Activated T-helper 2 cell treated with anti-CD3 and anti-CD28 coated beads, Interferon-gamma antibody, Interleukin-2, Interleukin-4, amounts not matched to agents 10 μg/mL and 5 μg/mL and 100 μg/mL, durations not matched to agents 14 hours and 24 hours and 36 hours (primary cell): ENCODE measurements at regions of chr9 and their contacts with region 1.

Region 1: DNA sequence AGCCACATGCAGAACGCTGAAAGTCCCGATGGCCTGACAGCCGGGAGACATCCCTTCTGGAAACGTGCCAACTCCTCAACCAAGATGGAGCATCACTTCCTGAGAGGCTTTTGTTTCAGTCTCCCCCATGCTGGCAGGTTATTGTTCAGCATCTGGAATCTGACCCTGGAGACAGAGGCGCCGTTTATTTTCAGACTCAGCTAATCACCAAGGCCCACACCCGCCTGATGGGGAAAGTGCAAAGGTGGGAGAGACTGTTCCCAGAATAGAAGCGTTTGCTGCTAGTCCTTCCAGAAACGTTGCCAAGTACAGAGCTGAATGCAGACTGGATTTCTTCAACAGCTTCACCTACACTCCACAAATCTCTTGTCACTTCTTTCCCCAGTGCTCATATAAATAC is 41.8 kb upstream of the S1PR3 start:
- DNase-seq: no peak
- H3K4me3 Mint-ChIP-seq: no peak overlapping the region
- H3K27ac Mint-ChIP-seq: no peak overlapping the region
- H3K4me1 Mint-ChIP-seq: peaks cover 44% of the 10 kb centered on the region
- H3K27me3 Mint-ChIP-seq: peaks cover 11% of the 10 kb centered on the region

Region 2: GRCh38 chr9:88835038-88835466 is 114.4 kb before region 1 on chr9:
- intact Hi-C with region 1: loop called (anchors 10 kb)
- DNase-seq: no peak
- H3K4me3 Mint-ChIP-seq: no peak overlapping the region
- H3K27ac Mint-ChIP-seq: no peak overlapping the region
- H3K4me1 Mint-ChIP-seq: peaks cover 19% of the 10 kb centered on the region
- H3K27me3 Mint-ChIP-seq: peaks cover 69% of the 10 kb centered on the region

Region 3: DNA sequence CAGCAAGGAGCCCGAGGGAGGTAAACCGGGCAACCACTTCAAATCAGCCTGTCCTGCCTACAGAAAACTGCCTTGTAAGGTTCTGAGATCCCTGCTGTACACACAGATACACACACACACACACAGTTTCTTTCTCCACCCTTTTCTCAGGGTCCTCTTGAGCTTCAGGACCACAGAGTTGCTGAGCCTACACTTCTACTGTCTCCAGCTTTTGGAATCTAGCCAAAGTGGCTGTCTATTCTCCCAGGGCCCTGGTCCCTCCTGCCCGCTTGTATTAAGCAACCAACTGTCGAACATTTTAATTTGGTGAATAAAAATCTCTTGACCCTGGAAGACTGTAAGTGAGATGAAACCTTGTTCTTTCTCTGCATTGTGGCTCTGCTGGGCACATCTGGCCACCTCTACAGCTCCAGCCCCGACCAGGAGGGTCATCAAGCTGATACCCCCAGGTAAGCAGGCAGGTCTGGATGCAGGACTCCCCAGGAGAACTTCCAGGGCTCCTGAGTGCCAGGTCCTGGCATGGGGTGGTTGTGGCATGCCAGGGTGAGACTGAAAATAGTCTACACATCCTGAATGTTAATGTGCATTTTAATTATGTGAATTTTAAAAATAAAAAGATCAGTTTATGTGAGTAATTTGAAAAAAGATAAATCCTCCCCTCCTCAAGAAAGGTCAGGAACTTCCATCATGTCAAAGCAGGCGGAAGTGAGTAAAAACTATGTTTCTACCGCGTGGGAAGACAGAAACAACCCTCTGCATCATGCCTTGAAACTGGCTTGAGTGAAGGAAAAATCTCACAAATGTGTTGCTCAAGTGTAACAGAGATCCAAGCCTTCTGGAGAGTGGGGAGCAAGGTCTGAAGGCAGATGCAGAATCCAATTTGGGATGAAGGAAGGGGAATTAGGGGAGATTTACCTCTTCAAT is 26.8 kb after region 1 on chr9:
- intact Hi-C with region 1: loop called (anchors 2 kb)
- DNase-seq: no peak
- H3K4me3 Mint-ChIP-seq: peak overlapping the region; percentile 62
- H3K27ac Mint-ChIP-seq: peak overlapping the region; percentile 89
- H3K4me1 Mint-ChIP-seq: peaks cover 18% of the 10 kb centered on the region
- H3K27me3 Mint-ChIP-seq: peaks cover under 1% of the 10 kb centered on the region

Region 4: GRCh38 chr9:88988796-88989560 is 39.6 kb after region 1 on chr9:
- intact Hi-C with region 1: loop called (anchors 2 kb)
- DNase-seq: no peak
- H3K4me3 Mint-ChIP-seq: peak overlapping the region; percentile 64
- H3K27ac Mint-ChIP-seq: peak overlapping the region; percentile 90
- H3K4me1 Mint-ChIP-seq: peaks cover 51% of the 10 kb centered on the region
- H3K27me3 Mint-ChIP-seq: peaks cover 13% of the 10 kb centered on the region

Region 5: DNA sequence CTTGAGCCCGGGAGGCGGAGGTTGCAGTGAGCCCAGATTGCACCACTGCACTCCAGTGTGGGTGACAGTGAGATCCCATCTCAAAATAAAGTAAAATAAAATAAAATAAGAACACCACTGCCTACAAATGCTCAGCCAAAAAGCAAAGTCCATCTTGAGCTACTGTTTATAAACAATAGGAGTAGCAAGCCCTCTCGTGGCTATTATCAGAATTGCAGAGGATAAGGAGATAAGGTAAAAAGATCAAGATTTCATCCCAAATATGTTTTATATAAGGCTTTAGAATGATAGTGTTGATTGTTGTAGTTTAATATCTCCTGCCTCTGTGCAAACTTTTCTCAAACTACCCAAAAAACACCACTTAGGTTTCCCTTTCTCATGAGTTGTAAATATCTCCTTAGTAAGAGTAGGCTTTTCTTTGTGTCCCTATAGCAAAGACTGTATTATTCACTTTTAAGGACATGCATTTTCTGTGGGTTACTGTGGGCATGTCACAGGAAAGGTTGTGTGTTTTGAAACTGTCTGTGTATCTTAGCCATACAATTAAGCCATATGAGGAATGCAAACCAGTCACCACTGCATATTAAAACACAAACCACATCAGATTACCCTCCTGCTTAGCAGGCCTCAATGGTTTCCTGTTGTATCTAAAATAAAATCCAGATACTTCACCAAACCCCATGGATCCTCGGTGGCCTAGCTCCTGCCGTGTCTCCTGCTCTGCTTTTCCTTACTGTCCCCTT is 329.7 kb after region 1 on chr9:
- intact Hi-C with region 1: loop called (anchors 5 kb)
- DNase-seq: no peak
- H3K4me3 Mint-ChIP-seq: no peak overlapping the region
- H3K27ac Mint-ChIP-seq: no peak overlapping the region
- H3K4me1 Mint-ChIP-seq: peaks cover 23% of the 10 kb centered on the region
- H3K27me3 Mint-ChIP-seq: peaks cover 17% of the 10 kb centered on the region